ENCODE measurements at regions of chr16 and their contacts with region 1.

Region 1: DNA sequence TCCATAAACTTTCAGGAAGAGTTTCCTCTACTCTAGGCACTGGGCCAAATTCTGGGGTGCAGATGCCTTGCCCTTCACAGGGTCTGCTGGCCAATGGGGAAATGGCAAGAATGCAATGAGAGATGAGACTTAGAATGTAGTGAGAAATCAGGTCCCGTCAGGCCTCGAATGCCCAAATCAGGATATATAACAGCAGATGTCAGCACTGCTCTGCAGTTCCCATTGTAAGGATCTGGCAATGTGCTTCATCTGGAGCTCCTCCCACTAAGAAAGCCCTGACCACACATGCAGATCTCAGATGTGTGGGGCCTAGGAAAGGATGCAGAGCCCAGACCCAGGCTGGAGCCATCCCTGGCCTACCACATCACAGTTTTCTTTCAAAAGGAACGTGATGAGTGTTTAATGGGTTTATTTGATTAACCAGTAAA is 13.9 kb upstream of the LPCAT2 start:
- DNase-seq: peak; percentile 77
- H3K4me3 ChIP-seq: no peak overlapping the region
- H3K27ac ChIP-seq: peak overlapping the region; percentile 84 to 94
- H3K4me1 ChIP-seq: peaks cover 37 to 48% of the 10 kb centered on the region in 2 experiments
- H3K27me3 ChIP-seq: no peaks in the 10 kb centered on the region
- CTCF ChIP-seq: peak; percentile 56
- EP300 ChIP-seq: peak in 1 of 2 experiments; percentile 27; a peak in 1 of 4 replicates
- RAD21 ChIP-seq: peak; percentile 88

Region 2: GRCh38 chr16:55418585-55418984 is 76.4 kb before region 1 on chr16:
- CTCF ChIA-PET with region 1: no interaction called
- POLR2A ChIA-PET with region 1: no interaction called
- DNase-seq: no peak
- H3K4me3 ChIP-seq: no peak overlapping the region
- H3K27ac ChIP-seq: no peak overlapping the region
- H3K4me1 ChIP-seq: no peaks in the 10 kb centered on the region
- H3K27me3 ChIP-seq: no peaks in the 10 kb centered on the region
- CTCF ChIP-seq: no peak
- EP300 ChIP-seq: no peak
- RAD21 ChIP-seq: no peak

Region 3: GRCh38 chr16:55480228-55480661 is 14.8 kb before region 1 on chr16:
- CTCF ChIA-PET with region 1: interaction called, 11 read pairs
- POLR2A ChIA-PET with region 1: interaction called, 6 read pairs
- DNase-seq: peak; percentile 84
- H3K4me3 ChIP-seq: peak overlapping the region; percentile 88 to 96
- H3K27ac ChIP-seq: peak overlapping the region; percentile 74 to 98
- H3K4me1 ChIP-seq: peaks cover 10 to 35% of the 10 kb centered on the region in 2 experiments
- H3K27me3 ChIP-seq: no peaks in the 10 kb centered on the region
- CTCF ChIP-seq: no peak
- EP300 ChIP-seq: peak in 1 of 2 experiments; percentile 45; a peak in 1 of 4 replicates
- RAD21 ChIP-seq: no peak

Region 4: DNA sequence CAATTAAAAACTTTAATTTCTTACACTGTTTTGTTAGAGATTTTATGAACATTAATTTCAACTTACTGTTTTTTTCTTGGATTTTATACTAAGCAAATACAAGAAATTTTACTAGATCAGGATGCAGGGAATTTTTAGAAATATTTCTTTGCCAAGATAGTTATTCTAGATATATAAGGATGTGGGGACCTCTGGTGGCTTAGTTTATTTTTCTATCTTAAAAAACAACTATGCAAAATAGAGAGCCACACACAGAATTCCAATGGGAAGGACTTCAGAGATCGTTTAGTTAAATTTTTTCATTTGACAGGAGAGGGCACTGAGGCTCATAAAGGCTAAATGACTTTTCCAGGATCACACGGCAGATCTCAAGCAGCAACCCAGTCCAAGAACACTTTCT is 48.5 kb after region 1 on chr16:
- CTCF ChIA-PET with region 1: interaction called, 10 read pairs
- POLR2A ChIA-PET with region 1: no interaction called
- DNase-seq: peak; percentile 16
- H3K4me3 ChIP-seq: no peak overlapping the region
- H3K27ac ChIP-seq: peak overlapping the region; percentile 55 to 65; a peak in 2 of 4 replicates
- H3K4me1 ChIP-seq: peaks cover 9 to 15% of the 10 kb centered on the region in 2 experiments; a peak in 3 of 4 replicates
- H3K27me3 ChIP-seq: no peaks in the 10 kb centered on the region
- CTCF ChIP-seq: peak; percentile 65
- EP300 ChIP-seq: no peak
- RAD21 ChIP-seq: peak; percentile 74